GM23248 (cell line): ENCODE measurements at regions of chr1 and their contacts with region 1.

Region 1: DNA sequence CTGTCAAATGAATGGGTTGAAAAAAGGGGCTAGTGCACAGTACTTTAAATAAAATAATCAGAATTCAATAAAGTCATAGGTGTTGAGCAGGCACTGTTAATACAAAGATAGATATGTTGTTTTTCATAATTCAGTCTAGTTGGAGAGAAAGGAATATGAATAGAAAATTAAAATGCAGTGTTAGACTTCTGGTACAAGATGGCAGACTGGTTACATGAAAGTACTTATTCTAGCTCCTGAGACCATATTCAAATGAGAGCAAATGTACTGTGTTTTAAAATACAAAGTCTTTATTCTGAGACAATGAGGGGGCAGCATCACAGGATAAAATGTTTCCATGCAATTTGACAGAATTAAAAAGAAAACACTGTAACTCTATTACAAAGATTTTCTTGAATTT is 542.1 kb downstream of the COL11A1 start:
- DNase-seq: no peak
- H3K4me3 ChIP-seq: no peak overlapping the region
- H3K27ac ChIP-seq: no peak overlapping the region
- H3K4me1 ChIP-seq: no peaks in the 10 kb centered on the region
- H3K27me3 ChIP-seq: no peaks in the 10 kb centered on the region

Region 2: GRCh38 chr1:102967786-102968185 is 401.6 kb after region 1 on chr1:
- in situ Hi-C with region 1: loop called (anchors 10 kb)
- DNase-seq: no peak
- H3K4me3 ChIP-seq: no peak overlapping the region
- H3K27ac ChIP-seq: no peak overlapping the region
- H3K4me1 ChIP-seq: no peaks in the 10 kb centered on the region
- H3K27me3 ChIP-seq: no peaks in the 10 kb centered on the region